HEK293 (cell line): ENCODE measurements at regions of chr19 and their contacts with region 1.

Region 1: GRCh38 chr19:32224371-32225244 is 120.8 kb upstream of the ZNF507 start:
- H3K4me3 ChIP-seq: no peak overlapping the region
- H3K27ac ChIP-seq: no peak overlapping the region
- H3K4me1 ChIP-seq: peaks cover 10% of the 10 kb centered on the region
- CTCF ChIP-seq: peak; percentile 97

Region 2: DNA sequence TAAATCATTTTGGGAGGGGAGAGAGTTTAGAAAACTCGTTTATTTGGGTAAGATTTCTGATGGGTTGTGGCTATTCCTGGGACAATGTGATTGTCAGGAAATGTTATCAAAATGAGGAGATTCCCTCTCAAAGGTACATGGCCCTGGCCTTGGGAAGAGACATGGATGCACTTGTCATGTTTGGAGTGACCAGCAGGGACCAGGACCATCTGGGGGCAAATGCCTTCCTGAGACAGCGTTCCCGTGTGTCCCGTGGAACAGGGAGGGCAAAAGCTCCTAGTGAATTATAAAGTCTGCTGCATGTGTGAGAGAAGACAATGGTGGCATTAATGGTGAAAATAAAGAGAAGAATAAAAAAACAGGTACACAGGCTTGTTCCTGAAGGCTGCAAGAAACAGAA is 1535.1 kb before region 1 on chr19:
- CTCF ChIA-PET with region 1: interaction called, 10 read pairs
- POLR2A ChIA-PET with region 1: no interaction called
- H3K4me3 ChIP-seq: no peak overlapping the region
- H3K27ac ChIP-seq: no peak overlapping the region
- H3K4me1 ChIP-seq: 0 out of 2 replicates have a peak, but pooled peaks cover 5% of the 10 kb centered on the region
- CTCF ChIP-seq: no peak

Region 3: GRCh38 chr19:32041681-32042292 is 182.8 kb before region 1 on chr19:
- CTCF ChIA-PET with region 1: interaction called, 12 read pairs
- POLR2A ChIA-PET with region 1: no interaction called
- H3K4me3 ChIP-seq: peak overlapping the region; percentile 20
- H3K27ac ChIP-seq: no peak overlapping the region
- H3K4me1 ChIP-seq: peaks cover 8% of the 10 kb centered on the region
- CTCF ChIP-seq: peak; percentile 88

Region 4: GRCh38 chr19:32174386-32175113 is 50.1 kb before region 1 on chr19:
- CTCF ChIA-PET with region 1: interaction called, 14 read pairs
- POLR2A ChIA-PET with region 1: no interaction called
- H3K4me3 ChIP-seq: no peak overlapping the region
- H3K27ac ChIP-seq: no peak overlapping the region
- H3K4me1 ChIP-seq: no peaks in the 10 kb centered on the region
- CTCF ChIP-seq: no peak

Region 5: GRCh38 chr19:32238076-32238475 is 13.5 kb after region 1 on chr19:
- CTCF ChIA-PET with region 1: interaction called, 26 read pairs
- POLR2A ChIA-PET with region 1: no interaction called
- H3K4me3 ChIP-seq: no peak overlapping the region
- H3K27ac ChIP-seq: no peak overlapping the region
- H3K4me1 ChIP-seq: peaks cover 3% of the 10 kb centered on the region; the same call in 1 of the 2 replicates
- CTCF ChIP-seq: no peak

Region 6: GRCh38 chr19:32296694-32297093 is 72.1 kb after region 1 on chr19:
- CTCF ChIA-PET with region 1: no interaction called
- POLR2A ChIA-PET with region 1: no interaction called
- H3K4me3 ChIP-seq: no peak overlapping the region
- H3K27ac ChIP-seq: no peak overlapping the region
- H3K4me1 ChIP-seq: no peaks in the 10 kb centered on the region
- CTCF ChIP-seq: no peak